A549 (cell line): ENCODE measurements at regions of chr20 and their contacts with region 1.

Region 1: GRCh38 chr20:38113401-38114325 is 51.4 kb downstream of the TGM2 start:
- DNase-seq: peak in 1 of 2 experiments; percentile 67
- ATAC-seq: peak in 1 of 2 experiments; percentile 61; a peak in 3 of 6 replicates
- H3K4me3 ChIP-seq: no peak overlapping the region
- H3K27ac ChIP-seq: peak overlapping the region; percentile 80 to 88
- H3K4me1 ChIP-seq: peaks cover 60% of the 10 kb centered on the region
- CTCF ChIP-seq: peak; percentile 35; the same call in 2 of the 3 replicates
- EP300 ChIP-seq: no peak
- POLR2A ChIP-seq: no peak
- RAD21 ChIP-seq: peak; percentile 43 to 62

Region 2: GRCh38 chr20:37131486-37131885 is 982.2 kb before region 1 on chr20:
- CTCF ChIA-PET with region 1: no interaction called
- POLR2A ChIA-PET with region 1: no interaction called
- DNase-seq: no peak
- ATAC-seq: no peak
- H3K4me3 ChIP-seq: no peak overlapping the region
- H3K27ac ChIP-seq: no peak overlapping the region
- H3K4me1 ChIP-seq: no peaks in the 10 kb centered on the region
- CTCF ChIP-seq: no peak
- EP300 ChIP-seq: no peak
- POLR2A ChIP-seq: no peak
- RAD21 ChIP-seq: no peak

Region 3: GRCh38 chr20:37449276-37449675 is 664.4 kb before region 1 on chr20:
- CTCF ChIA-PET with region 1: no interaction called
- POLR2A ChIA-PET with region 1: no interaction called
- DNase-seq: no peak
- ATAC-seq: no peak
- H3K4me3 ChIP-seq: no peak overlapping the region
- H3K27ac ChIP-seq: no peak overlapping the region
- H3K4me1 ChIP-seq: no peaks in the 10 kb centered on the region
- CTCF ChIP-seq: no peak
- EP300 ChIP-seq: no peak
- POLR2A ChIP-seq: no peak
- RAD21 ChIP-seq: no peak

Region 4: DNA sequence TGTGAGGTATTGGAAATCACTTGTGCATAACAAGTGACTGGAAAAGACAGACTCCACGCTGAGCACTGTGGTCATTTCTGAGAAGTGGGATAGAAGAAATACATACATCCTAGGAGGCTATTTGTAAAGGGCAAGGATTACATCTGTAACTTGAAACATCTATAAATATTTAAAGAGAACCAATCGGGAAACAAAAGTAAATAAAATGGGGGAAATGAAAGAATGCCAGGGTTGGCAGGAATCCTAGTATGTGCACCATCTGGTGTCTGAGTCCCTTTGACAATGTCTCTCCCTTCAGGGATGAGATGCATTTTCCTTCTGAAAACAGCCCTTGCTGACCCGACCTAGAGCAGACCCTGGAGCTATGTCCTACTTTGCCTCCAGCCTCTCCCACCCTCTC is 157.6 kb before region 1 on chr20:
- CTCF ChIA-PET with region 1: no interaction called
- POLR2A ChIA-PET with region 1: no interaction called
- DNase-seq: no peak
- ATAC-seq: peak in 1 of 2 experiments; percentile 44; a peak in 2 of 6 replicates
- H3K4me3 ChIP-seq: no peak overlapping the region
- H3K27ac ChIP-seq: no peak overlapping the region
- H3K4me1 ChIP-seq: peaks cover 11% of the 10 kb centered on the region; the same call in 1 of the 3 replicates
- CTCF ChIP-seq: no peak
- EP300 ChIP-seq: no peak
- POLR2A ChIP-seq: no peak
- RAD21 ChIP-seq: no peak

Region 5: DNA sequence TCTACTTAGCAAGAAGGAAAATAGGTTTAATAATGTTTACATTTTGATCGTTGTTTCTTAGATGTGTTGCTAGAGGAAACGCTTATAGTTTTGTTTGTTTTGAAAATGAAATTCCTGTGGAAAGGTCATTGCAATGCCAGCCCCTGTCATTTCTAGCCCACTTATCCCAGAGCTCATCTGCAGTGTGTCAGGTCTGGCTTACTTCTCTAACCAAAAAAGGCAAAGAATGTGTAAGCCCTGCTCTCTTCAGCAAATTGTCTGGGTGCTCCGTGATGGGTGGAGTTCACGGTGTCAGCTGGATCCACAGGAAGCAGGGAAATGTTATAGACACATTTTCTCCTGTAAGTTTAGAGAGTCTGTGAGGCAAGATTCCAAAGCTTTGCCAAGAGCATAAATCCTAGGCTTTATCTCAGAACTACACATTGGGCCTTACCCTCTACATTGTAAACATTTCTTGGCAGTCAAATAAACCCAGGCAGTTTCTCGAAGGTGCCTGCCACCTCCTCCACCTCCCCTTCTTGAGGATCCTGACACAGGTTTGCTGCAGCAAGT is 29.2 kb before region 1 on chr20:
- CTCF ChIA-PET with region 1: interaction called, 19 read pairs
- POLR2A ChIA-PET with region 1: no interaction called
- DNase-seq: peak in 1 of 2 experiments; percentile 29
- ATAC-seq: peak in 1 of 2 experiments; percentile 43; a peak in 2 of 6 replicates
- H3K4me3 ChIP-seq: no peak overlapping the region
- H3K27ac ChIP-seq: 0 out of 6 replicates have a peak overlapping the region, but pooled peaks of 1 of the 2 experiments have one; percentile 20
- H3K4me1 ChIP-seq: peaks cover 9% of the 10 kb centered on the region; the same call in 2 of the 3 replicates
- CTCF ChIP-seq: no peak
- EP300 ChIP-seq: no peak
- POLR2A ChIP-seq: no peak
- RAD21 ChIP-seq: no peak

Region 6: GRCh38 chr20:38094373-38094891 is 19.2 kb before region 1 on chr20:
- CTCF ChIA-PET with region 1: interaction called, 14 read pairs
- POLR2A ChIA-PET with region 1: interaction called, 3 read pairs
- DNase-seq: peak; percentile 33 to 57
- ATAC-seq: peak in 1 of 2 experiments; percentile 75; a peak in 2 of 6 replicates
- H3K4me3 ChIP-seq: no peak overlapping the region
- H3K27ac ChIP-seq: peak overlapping the region; percentile 68 to 85
- H3K4me1 ChIP-seq: peaks cover 20% of the 10 kb centered on the region
- CTCF ChIP-seq: no peak
- EP300 ChIP-seq: peak in 1 of 2 experiments; percentile 15; a peak in 1 of 5 replicates
- POLR2A ChIP-seq: no peak
- RAD21 ChIP-seq: no peak

Region 7: GRCh38 chr20:38127011-38127621 is 13.5 kb after region 1 on chr20:
- CTCF ChIA-PET with region 1: interaction called, 31 read pairs
- POLR2A ChIA-PET with region 1: interaction called, 4 read pairs
- DNase-seq: peak; percentile 52 to 58
- ATAC-seq: peak; percentile 39 to 45; a peak in 4 of 6 replicates
- H3K4me3 ChIP-seq: no peak overlapping the region
- H3K27ac ChIP-seq: peak overlapping the region; percentile 61 to 82
- H3K4me1 ChIP-seq: peaks cover 55% of the 10 kb centered on the region
- CTCF ChIP-seq: no peak
- EP300 ChIP-seq: no peak
- POLR2A ChIP-seq: no peak
- RAD21 ChIP-seq: no peak